ENCODE measurements at regions of chr3 and their contacts with region 1.

Region 1: DNA sequence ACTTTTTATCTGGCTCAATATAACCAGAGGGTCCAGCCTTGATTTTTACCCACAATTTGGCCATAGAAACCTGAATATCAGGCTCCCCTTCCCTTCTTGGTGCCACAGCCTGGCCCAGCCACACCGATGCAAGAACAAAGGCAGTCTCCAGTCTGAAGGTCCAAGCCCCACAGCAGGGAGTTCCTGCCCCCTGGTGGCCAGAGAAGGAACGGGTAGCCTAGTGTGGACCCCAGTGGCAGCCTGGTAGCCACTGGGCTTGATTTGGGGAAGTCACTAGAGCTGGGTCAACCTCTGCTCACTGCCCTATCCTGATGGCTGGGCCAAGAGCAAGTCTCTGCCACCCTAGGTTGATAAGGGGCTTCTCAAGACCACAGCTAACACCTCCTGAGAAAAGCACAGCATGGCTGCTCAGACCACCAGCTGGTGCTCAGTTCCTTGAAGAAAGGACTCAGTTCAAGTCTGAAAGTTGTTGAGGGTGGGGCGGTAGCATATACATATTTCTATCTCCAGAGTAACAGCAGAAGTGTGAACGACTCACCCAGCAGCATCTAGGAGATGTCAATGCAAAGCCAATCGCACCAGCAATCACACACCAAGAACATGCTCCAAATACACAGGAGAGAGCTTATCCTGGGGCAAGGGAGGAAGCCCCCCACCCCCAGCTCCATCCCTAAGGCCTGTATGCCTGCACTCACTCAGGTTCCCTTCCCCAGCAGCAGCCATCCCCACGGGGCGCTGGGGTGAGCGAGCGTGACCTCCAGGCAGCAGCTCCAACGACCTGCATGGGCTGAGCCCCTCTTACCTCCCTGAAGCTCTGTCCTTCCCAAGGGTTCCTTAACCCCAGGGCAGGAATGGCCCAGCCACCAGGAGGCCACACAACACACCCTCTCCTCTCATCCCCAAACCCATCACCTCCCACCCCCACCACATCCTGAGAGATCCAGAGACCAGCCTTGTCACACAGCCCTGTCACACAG is 7.6 kb downstream of the PFKFB4 start:
- DNase-seq: peak; percentile 79

Region 2: GRCh38 chr3:48400824-48401433 is 148.1 kb before region 1 on chr3:
- CTCF ChIA-PET with region 1: interaction called, 11 read pairs
- POLR2A ChIA-PET with region 1: no interaction called
- DNase-seq: peak; percentile 80

Region 3: GRCh38 chr3:48564017-48564416 is 15.0 kb after region 1 on chr3:
- CTCF ChIA-PET with region 1: no interaction called
- POLR2A ChIA-PET with region 1: no interaction called
- DNase-seq: no peak

Region 4: DNA sequence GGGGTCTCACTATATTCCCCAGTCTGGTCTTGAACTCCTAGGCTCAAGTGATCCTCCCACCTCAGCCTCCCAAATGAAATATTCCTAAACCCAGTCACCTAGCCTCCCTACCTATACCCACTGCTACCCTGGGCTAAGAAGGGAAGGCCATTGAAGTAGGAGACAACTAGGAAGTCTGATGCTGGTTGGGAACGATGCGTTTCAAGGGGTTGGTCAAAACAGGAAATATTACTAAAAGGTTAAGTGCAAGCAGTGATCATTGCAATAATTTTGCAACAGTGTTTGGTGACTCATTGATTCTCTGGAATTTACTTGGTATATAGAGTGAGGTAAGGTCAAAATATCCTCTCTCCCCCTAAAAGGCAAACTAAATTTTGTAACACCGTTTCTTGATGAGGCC is 65.0 kb after region 1 on chr3:
- CTCF ChIA-PET with region 1: no interaction called
- POLR2A ChIA-PET with region 1: no interaction called
- DNase-seq: no peak